ENCODE measurements at regions of chr7 and their contacts with region 1.

Region 1: GRCh38 chr7:57256637-57257375 is 124.6 kb upstream of the ZNF479 start:
- DNase-seq: peak; percentile 65 to 79
- H3K4me3 ChIP-seq: no peak overlapping the region
- H3K27ac ChIP-seq: no peak overlapping the region
- H3K4me1 ChIP-seq: no peaks in the 10 kb centered on the region
- H3K27me3 ChIP-seq: no peaks in the 10 kb centered on the region
- CTCF ChIP-seq: no peak
- POLR2A ChIP-seq: no peak

Region 2: DNA sequence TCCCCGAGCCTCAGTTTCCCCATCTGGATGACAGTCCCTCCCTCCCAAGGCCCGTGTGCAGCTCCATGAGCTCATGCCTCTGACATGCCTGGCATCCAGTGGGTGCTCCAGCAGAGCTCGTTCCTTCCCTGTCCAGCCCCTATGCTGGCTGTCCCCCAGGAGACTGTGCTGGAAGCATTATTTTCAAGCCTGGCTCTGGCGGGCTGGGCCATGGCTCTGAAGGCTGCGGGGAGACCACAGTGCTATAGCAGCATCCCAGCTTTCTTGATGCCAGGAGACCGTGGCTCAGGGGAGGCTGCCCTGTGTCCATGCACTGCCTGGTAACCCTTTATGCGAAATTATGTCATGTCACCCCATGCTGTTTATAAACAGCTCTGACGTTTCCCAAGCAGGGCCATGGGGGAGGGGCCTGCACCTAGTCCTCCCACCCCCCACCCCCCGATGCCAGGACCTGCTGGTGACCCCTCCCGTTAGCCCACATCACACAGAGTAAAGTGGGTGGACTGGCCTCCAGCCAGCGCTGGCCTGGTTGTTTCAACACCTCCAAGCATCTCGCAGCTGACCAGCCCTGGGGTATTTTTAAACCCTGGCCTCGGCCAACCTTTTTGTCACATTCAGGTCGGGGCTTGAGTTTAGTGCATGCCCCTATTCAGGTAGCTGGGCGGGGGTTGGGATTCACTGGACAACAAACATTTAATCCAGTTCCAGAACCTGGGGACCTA is 87.3 kb after region 1 on chr7:
- intact Hi-C with region 1: loop called (anchors 10 kb)
- DNase-seq: no peak
- H3K4me3 ChIP-seq: no peak overlapping the region
- H3K27ac ChIP-seq: no peak overlapping the region
- H3K4me1 ChIP-seq: no peaks in the 10 kb centered on the region
- H3K27me3 ChIP-seq: no peaks in the 10 kb centered on the region
- CTCF ChIP-seq: no peak
- POLR2A ChIP-seq: no peak